ENCODE measurements at regions of chr19 and their contacts with region 1.

Region 1: DNA sequence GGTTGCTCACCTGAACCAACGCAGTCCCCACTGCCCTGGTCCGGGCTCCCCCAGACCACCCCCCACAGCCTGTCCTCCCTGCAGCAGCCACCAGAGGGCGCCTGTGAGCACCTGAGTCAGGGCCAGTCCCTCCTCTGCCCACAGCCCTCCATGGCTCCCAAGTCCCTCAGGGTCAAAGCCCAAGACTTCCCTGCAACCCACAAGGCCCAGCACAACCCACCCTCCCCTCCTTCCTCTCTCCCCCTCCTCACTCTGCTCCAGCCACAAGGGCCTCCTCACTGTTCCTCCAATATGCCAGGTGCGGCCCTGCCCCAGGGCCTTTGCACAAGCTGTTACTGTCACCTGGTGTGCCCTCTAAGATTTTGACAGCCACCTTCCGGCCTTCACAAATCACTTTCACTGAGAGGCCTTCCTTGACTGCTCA is 10.9 kb downstream of the GNA15 start:
- DNase-seq: peak; percentile 45 to 85 (median 68)
- ATAC-seq: peak; percentile 77
- H3K4me3 ChIP-seq: no peak overlapping the region
- H3K4me3 Mint-ChIP-seq: no peak overlapping the region
- H3K27ac ChIP-seq: no peak overlapping the region
- H3K27ac Mint-ChIP-seq: no peak overlapping the region
- H3K4me1 ChIP-seq: no peaks in the 10 kb centered on the region
- H3K4me1 Mint-ChIP-seq: peaks cover 6% of the 10 kb centered on the region
- H3K27me3 ChIP-seq: no peaks in the 10 kb centered on the region
- H3K27me3 Mint-ChIP-seq: no peaks in the 10 kb centered on the region
- CTCF ChIP-seq: peak; percentile 81

Region 2: GRCh38 chr19:3075895-3076431 is 70.7 kb before region 1 on chr19:
- CTCF ChIA-PET with region 1: no interaction called
- POLR2A ChIA-PET with region 1: no interaction called
- intact Hi-C with region 1: no loop called
- DNase-seq: peak; percentile 58 to 89 (median 79)
- ATAC-seq: peak; percentile 100
- H3K4me3 ChIP-seq: no peak overlapping the region
- H3K4me3 Mint-ChIP-seq: no peak overlapping the region
- H3K27ac ChIP-seq: no peak overlapping the region
- H3K27ac Mint-ChIP-seq: no peak overlapping the region
- H3K4me1 ChIP-seq: peaks cover 10% of the 10 kb centered on the region
- H3K4me1 Mint-ChIP-seq: peaks cover 2% of the 10 kb centered on the region
- H3K27me3 ChIP-seq: no peaks in the 10 kb centered on the region
- H3K27me3 Mint-ChIP-seq: no peaks in the 10 kb centered on the region
- CTCF ChIP-seq: peak; percentile 85

Region 3: GRCh38 chr19:3125900-3126524 is 20.7 kb before region 1 on chr19:
- CTCF ChIA-PET with region 1: interaction called, 43 read pairs
- POLR2A ChIA-PET with region 1: interaction called, 3 read pairs
- intact Hi-C with region 1: no loop called
- DNase-seq: peak; percentile 58 to 80 (median 71)
- ATAC-seq: peak; percentile 97
- H3K4me3 ChIP-seq: no peak overlapping the region
- H3K4me3 Mint-ChIP-seq: no peak overlapping the region
- H3K27ac ChIP-seq: no peak overlapping the region
- H3K27ac Mint-ChIP-seq: no peak overlapping the region
- H3K4me1 ChIP-seq: no peaks in the 10 kb centered on the region
- H3K4me1 Mint-ChIP-seq: peaks cover 2% of the 10 kb centered on the region
- H3K27me3 ChIP-seq: peaks cover 0 to 3% of the 10 kb centered on the region in 2 experiments
- H3K27me3 Mint-ChIP-seq: peaks cover 2% of the 10 kb centered on the region
- CTCF ChIP-seq: peak; percentile 66

Region 4: DNA sequence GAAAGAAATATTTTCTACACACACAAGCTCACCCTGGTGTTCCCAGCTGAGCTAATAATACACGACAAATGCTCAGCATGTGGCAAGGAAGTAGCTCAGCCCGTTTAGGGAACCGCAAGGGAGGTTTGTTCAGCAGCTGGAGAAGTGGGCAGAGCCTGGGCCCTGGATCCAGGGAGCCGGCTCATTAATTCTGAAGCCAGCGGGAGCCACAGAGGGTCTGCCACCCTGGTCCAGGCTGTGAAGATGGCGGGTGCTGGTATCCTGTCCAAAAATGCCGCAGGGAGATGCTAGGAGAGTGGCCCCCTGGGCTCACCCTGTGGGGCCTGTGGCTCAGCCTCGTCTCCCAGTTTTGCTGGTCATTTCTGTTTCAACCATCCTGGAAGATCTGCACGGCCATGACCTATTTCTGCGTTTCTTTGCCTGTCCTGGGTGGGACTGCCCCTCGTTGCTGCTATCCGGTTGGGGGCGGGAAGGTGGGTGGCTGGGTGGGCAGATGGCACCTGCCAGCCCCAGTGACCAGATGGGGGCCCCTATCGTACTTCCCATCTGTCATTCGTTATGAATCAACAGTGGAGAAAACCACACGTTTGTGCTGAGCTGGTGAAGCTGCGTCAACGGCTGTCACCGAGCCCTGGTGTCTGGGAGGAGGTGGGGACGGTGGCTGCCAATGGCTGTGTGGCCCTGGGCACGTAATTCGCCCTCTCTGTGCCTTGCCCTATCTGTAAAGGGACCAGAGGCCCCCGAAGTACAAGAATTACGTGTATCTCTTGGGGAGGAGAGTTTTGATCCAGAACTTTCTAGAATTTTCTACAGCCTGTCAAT is 13.5 kb before region 1 on chr19:
- CTCF ChIA-PET with region 1: interaction called, 43 read pairs
- POLR2A ChIA-PET with region 1: interaction called, 3 read pairs
- intact Hi-C with region 1: no loop called
- DNase-seq: peak; percentile 50 to 92 (median 68)
- ATAC-seq: peak; percentile 96
- H3K4me3 ChIP-seq: no peak overlapping the region
- H3K4me3 Mint-ChIP-seq: peak overlapping the region; percentile 66
- H3K27ac ChIP-seq: peak overlapping the region; percentile 30 to 60
- H3K27ac Mint-ChIP-seq: peak overlapping the region; percentile 68
- H3K4me1 ChIP-seq: peaks cover 17% of the 10 kb centered on the region
- H3K4me1 Mint-ChIP-seq: peaks cover 20% of the 10 kb centered on the region
- H3K27me3 ChIP-seq: peaks cover 0 to 3% of the 10 kb centered on the region in 2 experiments
- H3K27me3 Mint-ChIP-seq: peaks cover 8% of the 10 kb centered on the region
- CTCF ChIP-seq: no peak

Region 5: GRCh38 chr19:3163230-3163886 is 16.7 kb after region 1 on chr19:
- CTCF ChIA-PET with region 1: interaction called, 41 read pairs
- POLR2A ChIA-PET with region 1: no interaction called
- intact Hi-C with region 1: loop called (anchors 1 kb)
- DNase-seq: peak; percentile 46 to 85 (median 75)
- ATAC-seq: peak; percentile 97
- H3K4me3 ChIP-seq: no peak overlapping the region
- H3K4me3 Mint-ChIP-seq: no peak overlapping the region
- H3K27ac ChIP-seq: no peak overlapping the region
- H3K27ac Mint-ChIP-seq: peak overlapping the region; percentile 14
- H3K4me1 ChIP-seq: no peaks in the 10 kb centered on the region
- H3K4me1 Mint-ChIP-seq: peaks cover 14% of the 10 kb centered on the region
- H3K27me3 ChIP-seq: no peaks in the 10 kb centered on the region
- H3K27me3 Mint-ChIP-seq: no peaks in the 10 kb centered on the region
- CTCF ChIP-seq: peak; percentile 89

Region 6: DNA sequence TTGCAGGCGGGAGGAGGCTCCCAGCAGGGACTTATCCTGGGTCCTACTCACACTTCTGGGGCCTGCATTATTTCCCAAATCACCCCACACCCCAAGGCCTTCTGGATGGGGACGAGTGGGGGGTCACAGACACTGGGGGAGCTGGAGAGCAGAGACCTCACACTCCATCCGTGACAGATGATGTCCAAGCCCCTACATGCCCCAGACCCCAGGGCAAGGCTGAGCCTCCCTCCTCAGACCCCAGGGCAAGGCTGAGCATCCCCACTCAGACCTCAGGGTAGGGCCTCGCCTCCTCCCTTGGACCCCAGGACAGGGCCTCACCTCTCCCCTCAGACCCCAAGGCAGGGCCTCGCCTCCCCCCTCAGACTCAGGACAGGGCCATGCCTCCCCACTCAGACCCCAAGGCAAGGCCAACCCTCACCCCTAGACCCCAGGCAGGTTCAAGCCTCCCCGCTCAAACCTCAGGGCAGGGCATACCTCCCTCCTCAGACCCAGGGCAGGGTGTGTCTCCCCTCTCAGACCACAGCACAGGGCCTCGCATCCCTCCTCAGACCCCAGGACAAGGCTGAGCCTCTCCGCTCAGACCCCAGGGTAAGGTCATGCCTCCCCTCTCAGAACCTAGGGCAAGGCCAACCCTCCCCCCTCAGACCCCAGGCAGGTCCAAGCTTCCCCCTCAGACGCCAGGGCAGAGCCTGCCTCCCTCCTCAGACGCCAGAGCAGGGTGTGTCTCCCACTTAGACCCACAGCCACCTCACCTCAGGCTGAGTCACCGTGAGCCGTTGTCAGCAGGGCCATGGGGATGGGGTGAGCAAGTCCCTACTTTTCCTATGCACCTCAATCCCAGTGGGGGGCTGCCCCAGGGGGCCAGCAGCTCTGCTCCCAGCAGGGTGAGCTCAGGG is 30.2 kb after region 1 on chr19:
- CTCF ChIA-PET with region 1: interaction called, 8 read pairs
- POLR2A ChIA-PET with region 1: no interaction called
- intact Hi-C with region 1: loop called in 1 of 2 experiments (anchors 2 kb)
- DNase-seq: peak; percentile 43 to 86 (median 82)
- ATAC-seq: peak; percentile 68
- H3K4me3 ChIP-seq: peak overlapping the region; percentile 45 to 66
- H3K4me3 Mint-ChIP-seq: peak overlapping the region; percentile 62
- H3K27ac ChIP-seq: peak overlapping the region; percentile 62 to 90
- H3K27ac Mint-ChIP-seq: peak overlapping the region; percentile 98
- H3K4me1 ChIP-seq: peaks cover 26% of the 10 kb centered on the region
- H3K4me1 Mint-ChIP-seq: peaks cover 26% of the 10 kb centered on the region
- H3K27me3 ChIP-seq: no peaks in the 10 kb centered on the region
- H3K27me3 Mint-ChIP-seq: no peaks in the 10 kb centered on the region
- CTCF ChIP-seq: no peak

Region 7: GRCh38 chr19:3505598-3506383 is 359.1 kb after region 1 on chr19 and contains the start of gene FZR1:
- CTCF ChIA-PET with region 1: no interaction called
- POLR2A ChIA-PET with region 1: no interaction called
- intact Hi-C with region 1: no loop called
- DNase-seq: peak; percentile 99 to 100 (median 100)
- ATAC-seq: peak; percentile 85
- H3K4me3 ChIP-seq: peak within 1 kb of the TSS; percentile 76 to 83
- H3K4me3 Mint-ChIP-seq: peak within 1 kb of the TSS; percentile 85
- H3K27ac ChIP-seq: peak within 1 kb of the TSS; percentile 97
- H3K27ac Mint-ChIP-seq: peak within 1 kb of the TSS; percentile 97
- H3K4me1 ChIP-seq: peaks cover 36% of the 10 kb centered on the region
- H3K4me1 Mint-ChIP-seq: peaks cover 48% of the 10 kb centered on the region
- H3K27me3 ChIP-seq: no peaks in the 10 kb centered on the region
- H3K27me3 Mint-ChIP-seq: no peaks in the 10 kb centered on the region
- CTCF ChIP-seq: no peak
- total RNA-seq, gene FZR1: 130 to 142 TPM

Measured in CD8-positive, alpha-beta T cell (primary cell).